Dendritic cell treated with granulocyte-macrophage colony-stimulating factor and Interleukin-4, amounts not matched to agents 40 ng/mL and 50 ng/mL, for 4 days (primary cell): ENCODE measurements at regions of chr5 and their contacts with region 1.

Region 1: DNA sequence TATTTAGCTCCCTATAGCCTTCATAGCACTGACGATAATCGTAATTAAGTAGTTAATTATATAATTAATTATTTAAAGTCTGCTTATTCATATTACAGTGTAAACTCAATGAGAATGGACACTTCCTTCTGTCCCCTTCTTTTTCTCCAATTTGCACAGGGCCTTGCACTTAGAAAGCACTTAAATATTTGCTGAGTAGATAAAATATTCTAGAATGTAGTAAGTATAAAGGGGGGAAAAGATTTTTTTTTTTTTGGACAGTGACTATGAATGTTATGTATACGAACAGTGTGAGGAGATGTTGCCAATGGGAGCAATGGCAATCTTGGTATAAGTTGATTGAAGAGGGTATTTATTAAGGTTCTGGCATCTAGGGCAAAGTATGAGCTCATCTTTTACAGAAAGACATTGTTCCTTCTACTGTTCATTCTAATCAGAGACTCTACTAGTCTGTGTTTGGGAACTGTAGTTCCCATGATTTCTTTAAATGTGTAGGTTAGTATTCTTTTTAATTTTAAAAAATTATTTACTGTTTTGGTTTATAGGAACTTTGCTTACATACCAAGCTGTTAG is 49.4 kb downstream of the YTHDC2 start:
- H3K4me3 Mint-ChIP-seq: no peak overlapping the region
- H3K27ac Mint-ChIP-seq: no peak overlapping the region
- H3K4me1 Mint-ChIP-seq: no peaks in the 10 kb centered on the region
- H3K27me3 Mint-ChIP-seq: no peaks in the 10 kb centered on the region

Region 2: DNA sequence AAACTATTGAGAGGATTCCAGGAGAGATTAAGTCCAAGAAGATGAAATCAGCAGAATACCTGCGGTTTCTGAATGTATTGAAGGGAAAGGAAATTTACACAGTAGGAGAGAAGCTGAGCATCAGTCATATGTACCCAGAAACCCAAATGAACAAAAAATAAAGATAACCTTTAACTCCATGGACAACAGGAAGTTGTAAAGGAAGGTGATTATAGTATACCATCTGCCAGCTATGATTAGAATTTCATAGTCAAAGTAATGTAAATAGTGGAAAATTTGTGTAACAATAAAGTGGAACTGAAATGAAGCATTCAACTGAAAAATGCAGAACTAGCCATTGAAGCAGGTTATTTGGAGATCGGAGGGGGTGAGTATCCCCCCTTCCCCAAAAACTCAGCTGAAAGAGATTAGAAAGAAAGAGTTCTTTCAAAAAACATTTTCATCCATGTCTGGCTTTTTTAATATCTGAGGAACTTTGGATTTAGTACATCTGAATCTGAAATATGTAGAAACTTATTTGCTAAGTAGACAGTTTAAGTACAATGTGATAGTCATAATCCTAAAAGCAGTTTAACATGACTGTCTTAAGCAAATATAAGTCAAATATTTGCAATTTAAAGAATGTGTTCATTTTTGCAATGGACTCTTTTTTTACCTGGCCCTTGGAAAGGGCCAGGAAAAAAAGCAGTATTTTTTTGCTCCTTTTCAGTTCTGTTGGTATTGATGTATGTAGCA is 766.8 kb before region 1 on chr5:
- intact Hi-C with region 1: loop called (anchors 10 kb)
- H3K4me3 Mint-ChIP-seq: no peak overlapping the region
- H3K27ac Mint-ChIP-seq: peak overlapping the region; percentile 68
- H3K4me1 Mint-ChIP-seq: peaks cover 8% of the 10 kb centered on the region
- H3K27me3 Mint-ChIP-seq: no peaks in the 10 kb centered on the region